Vagina (tissue), 2 donors: ENCODE measurements at regions of chr16 and their contacts with region 1.

Region 1: GRCh38 chr16:20866145-20866772 is 33.9 kb downstream of the DCUN1D3 start:
- DNase-seq: no peak
- H3K4me3 ChIP-seq: no peak overlapping the region
- H3K27ac ChIP-seq: peak overlapping the region; percentile 43
- H3K4me1 ChIP-seq: peaks cover 70% of the 10 kb centered on the region
- H3K27me3 ChIP-seq: no peaks in the 10 kb centered on the region
- CTCF ChIP-seq: no peak
- POLR2A ChIP-seq: no peak

Region 2: GRCh38 chr16:20904507-20905079 is 38.3 kb after region 1 on chr16:
- intact Hi-C with region 1: loop called (anchors 5 kb)
- DNase-seq: no peak
- H3K4me3 ChIP-seq: no peak overlapping the region
- H3K27ac ChIP-seq: peak overlapping the region; percentile 79
- H3K4me1 ChIP-seq: peaks cover 73% of the 10 kb centered on the region
- H3K27me3 ChIP-seq: no peaks in the 10 kb centered on the region
- CTCF ChIP-seq: no peak
- POLR2A ChIP-seq: no peak